ENCODE measurements at regions of chr5 and their contacts with region 1.

Region 1: DNA sequence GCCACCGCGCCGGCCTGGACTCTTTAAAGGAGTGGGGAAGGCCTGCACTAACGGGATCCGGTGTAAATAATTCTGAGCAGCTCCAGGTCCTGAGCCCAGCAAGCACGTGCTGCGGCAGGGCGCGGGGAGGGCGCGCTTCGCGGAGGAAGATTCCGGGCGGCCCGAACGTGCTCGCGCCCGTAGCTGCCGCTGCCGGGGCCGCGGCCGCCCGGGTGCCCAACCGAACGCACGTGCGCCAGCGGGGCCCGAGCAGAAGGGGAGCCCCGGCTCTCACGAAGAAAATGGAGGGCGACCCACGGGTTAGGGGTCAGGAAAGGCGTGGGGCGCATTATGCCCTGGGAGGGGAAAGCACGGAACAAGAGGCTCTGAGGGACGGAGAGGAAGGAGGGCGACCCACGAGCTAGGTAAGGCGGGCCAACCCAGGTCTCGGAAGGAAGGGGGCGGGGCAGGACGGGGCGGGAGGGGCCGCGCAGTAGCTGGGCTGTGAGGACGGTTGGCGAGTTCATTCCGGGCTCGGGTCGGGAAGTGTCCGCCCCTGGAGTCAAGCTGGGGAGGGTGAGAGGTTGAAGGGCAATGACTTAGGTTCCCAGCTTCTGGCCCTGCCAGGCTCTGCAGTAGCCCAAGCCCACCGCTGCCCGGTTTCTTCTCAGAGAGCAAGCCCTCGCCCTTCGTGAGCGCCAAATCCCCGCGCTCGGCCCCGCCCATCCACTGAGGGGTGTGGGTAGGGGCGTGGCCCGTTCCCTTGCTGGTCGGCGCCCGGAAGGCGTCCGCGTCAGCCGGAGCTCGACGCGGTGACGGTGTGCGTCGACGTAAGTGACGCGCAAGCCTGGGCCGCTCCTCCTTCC is at the start of gene ZNF131:
- DNase-seq: peak; percentile 97
- H3K4me3 ChIP-seq: peak within 1 kb of the TSS; percentile 87 to 94
- H3K27ac ChIP-seq: peak within 1 kb of the TSS; percentile 98 to 99
- H3K4me1 ChIP-seq: peaks cover 11% of the 10 kb centered on the region
- H3K27me3 ChIP-seq: no peaks in the 10 kb centered on the region
- CTCF ChIP-seq: peak in 1 of 3 experiments; percentile 3
- POLR2A ChIP-seq: peak; percentile 30
- total RNA-seq, gene ZNF131: 67.8 to 80.6 TPM

Region 2: DNA sequence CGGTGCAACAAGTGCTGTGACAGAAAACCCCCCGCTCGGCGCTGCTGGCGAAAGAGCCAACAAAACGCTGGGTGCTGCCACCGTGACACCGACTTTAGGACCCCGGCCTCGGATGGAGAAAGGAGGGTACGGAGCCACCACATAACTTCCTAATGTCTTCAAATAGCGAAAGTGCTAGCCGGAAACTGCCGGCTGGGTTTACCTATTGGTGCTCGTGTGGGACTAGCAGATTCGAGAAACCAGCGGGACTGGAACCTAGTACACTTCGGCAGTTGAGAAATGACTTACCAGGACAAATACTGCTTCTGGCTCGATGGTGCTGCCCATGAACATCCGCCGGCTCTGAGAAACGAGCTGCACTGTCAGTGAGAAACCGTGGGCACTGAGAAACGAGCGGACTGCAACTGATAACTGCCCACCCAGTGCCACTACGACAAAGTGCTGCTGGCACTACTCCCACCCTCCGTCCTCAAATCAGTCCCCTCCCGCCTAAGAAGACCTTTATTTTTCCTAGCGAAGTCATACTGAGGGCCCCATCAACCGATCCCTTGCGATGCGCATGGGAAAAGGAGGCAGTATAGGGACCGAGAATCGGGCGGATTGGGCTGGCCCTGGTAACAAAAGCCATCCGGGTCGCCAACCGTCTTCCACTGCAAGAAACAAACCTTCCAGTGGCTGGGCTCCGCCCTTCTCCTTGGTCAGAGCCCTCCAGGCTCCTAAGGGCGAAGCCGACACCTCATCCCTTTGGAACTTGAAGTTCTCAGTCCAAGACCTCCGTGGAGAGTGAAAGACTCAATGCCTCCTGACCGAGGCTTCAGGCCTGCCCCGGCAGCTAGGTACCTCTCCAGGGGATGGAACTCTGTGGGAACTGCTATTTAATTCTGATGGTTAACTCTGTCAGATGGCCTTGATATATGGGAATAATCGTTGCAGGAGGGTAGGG is 53.9 kb before region 1 on chr5:
- intact Hi-C with region 1: loop called (anchors 10 kb)
- DNase-seq: peak; percentile 96
- H3K4me3 ChIP-seq: peak overlapping the region; percentile 83 to 90
- H3K27ac ChIP-seq: peak overlapping the region; percentile 98 to 100
- H3K4me1 ChIP-seq: peaks cover 18% of the 10 kb centered on the region
- H3K27me3 ChIP-seq: no peaks in the 10 kb centered on the region
- CTCF ChIP-seq: no peak
- POLR2A ChIP-seq: no peak